Right lobe of liver (tissue), 6 donors: ENCODE measurements at regions of chr3 and their contacts with region 1.

Region 1: GRCh38 chr3:123489400-123490004 is 40.6 kb upstream of the ADCY5 start:
- DNase-seq: peak; percentile 57 to 67 (median 62)
- ATAC-seq: peak; percentile 89 to 94 (median 91)
- H3K4me3 ChIP-seq: no peak overlapping the region
- H3K27ac ChIP-seq: no peak overlapping the region
- H3K4me1 ChIP-seq: no peaks in the 10 kb centered on the region
- H3K27me3 ChIP-seq: no peaks in the 10 kb centered on the region
- CTCF ChIP-seq: peak; percentile 74 to 88 (median 86)
- POLR2A ChIP-seq: no peak

Region 2: DNA sequence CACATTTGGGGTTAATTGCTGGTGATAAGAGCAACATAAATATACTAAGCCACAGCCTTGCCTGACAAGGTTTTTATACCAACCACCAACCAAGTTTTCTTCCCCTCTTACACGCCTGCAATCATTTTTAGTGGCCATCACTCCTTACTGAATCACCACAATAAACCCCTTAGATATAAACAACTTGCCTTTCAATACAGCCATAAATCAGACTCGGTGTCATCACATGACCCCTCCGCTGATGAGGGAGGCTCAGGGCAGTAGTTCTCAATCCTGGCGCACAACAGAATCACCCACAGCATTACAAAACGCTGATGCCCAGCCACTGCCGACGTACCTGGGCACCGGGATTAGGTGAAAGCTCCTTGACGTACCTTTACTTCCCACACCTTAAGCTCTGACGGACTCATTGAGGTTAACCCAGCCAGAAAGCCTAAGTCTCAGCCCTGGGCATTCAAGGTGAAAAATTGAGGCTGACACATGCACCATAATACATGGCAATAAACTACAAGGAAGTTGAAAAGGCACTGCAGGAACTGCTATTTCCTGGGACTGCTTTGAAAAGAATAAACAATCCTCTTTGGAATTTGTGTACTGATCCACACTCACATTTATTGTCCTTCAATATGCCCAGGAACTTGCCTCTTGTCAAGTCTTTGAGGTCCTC is 57.7 kb before region 1 on chr3:
- intact Hi-C with region 1: no loop called
- DNase-seq: no peak
- ATAC-seq: no peak
- H3K4me3 ChIP-seq: no peak overlapping the region
- H3K27ac ChIP-seq: no peak overlapping the region
- H3K4me1 ChIP-seq: no peaks in the 10 kb centered on the region
- H3K27me3 ChIP-seq: no peaks in the 10 kb centered on the region
- CTCF ChIP-seq: no peak
- POLR2A ChIP-seq: no peak

Region 3: DNA sequence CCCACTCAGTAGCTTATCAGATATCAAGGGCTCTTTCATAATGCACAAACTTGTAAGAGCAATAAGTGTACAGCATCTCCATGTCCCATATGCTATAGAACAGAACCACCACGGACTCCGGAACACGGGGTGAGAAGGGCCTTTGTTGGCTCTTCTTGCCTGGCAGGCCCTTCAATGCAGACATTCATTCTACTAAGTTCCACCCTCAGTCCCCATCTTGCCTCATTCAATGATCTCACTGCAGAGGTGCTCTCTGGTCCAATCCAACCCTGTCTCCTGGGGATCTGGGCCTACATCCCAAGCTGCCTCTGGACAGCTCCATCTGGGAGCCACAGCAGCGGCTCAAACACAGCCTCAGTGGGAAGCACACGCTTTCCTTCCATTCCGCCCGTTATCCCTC is 78.5 kb after region 1 on chr3:
- intact Hi-C with region 1: loop called in 1 of 2 experiments (anchors 10 kb)
- DNase-seq: no peak
- ATAC-seq: no peak
- H3K4me3 ChIP-seq: no peak overlapping the region
- H3K27ac ChIP-seq: no peak overlapping the region
- H3K4me1 ChIP-seq: no peaks in the 10 kb centered on the region
- H3K27me3 ChIP-seq: no peaks in the 10 kb centered on the region
- CTCF ChIP-seq: no peak
- POLR2A ChIP-seq: no peak

Region 4: GRCh38 chr3:124467980-124468902 is 978.7 kb after region 1 on chr3:
- intact Hi-C with region 1: no loop called
- DNase-seq: peak; percentile 51 to 61 (median 61)
- ATAC-seq: peak; percentile 96 to 97 (median 97)
- H3K4me3 ChIP-seq: no peak overlapping the region
- H3K27ac ChIP-seq: no peak overlapping the region
- H3K4me1 ChIP-seq: no peaks in the 10 kb centered on the region
- H3K27me3 ChIP-seq: no peaks in the 10 kb centered on the region
- CTCF ChIP-seq: peak; percentile 94 to 98 (median 95)
- POLR2A ChIP-seq: no peak